ENCODE measurements at regions of chr22 and their contacts with region 1.

Region 1: DNA sequence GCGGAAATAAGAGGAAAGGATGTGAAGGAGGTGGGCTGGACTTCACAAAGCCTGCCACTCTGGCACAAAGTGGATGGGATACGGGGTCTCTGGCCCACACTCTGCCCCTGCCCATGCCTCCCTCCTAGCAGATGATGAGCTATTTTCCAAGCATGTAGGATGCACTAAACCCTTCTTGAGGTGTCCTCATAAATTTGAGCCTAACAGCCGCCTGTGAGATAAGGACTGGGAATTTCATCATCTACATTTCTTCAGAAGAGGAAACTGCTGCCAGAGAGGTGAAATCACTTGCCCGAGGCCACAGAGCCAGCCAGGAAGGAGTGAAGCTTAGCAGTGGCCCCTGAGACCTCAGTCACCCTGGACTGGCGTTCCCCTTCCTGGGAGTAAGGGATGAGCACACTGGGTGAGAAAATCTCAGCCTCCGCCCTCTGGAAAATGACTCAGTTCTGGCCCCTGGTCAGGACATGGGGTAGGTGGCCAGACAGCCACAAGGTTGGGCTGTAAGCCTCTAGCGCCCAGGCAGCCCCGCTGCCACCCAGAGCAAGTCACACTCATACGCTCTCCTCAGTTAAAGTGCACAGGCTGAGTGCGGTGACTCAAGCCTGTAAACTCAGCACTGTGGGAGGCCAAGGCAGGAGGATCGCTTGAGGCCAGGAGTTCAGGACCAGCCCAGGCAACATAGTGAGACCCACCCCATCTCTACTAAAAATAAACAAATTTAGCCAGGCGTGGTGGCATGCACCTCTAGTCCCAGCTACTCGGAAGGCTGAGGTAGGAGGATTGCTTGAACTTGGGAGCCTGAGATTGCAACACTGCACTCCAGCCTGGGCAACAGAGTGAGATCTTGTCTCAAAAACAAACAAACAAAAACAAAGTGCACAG is 27.8 kb downstream of the MB start:
- DNase-seq: peak; percentile 86 to 97
- ATAC-seq: peak; percentile 57 to 72
- H3K4me3 ChIP-seq: peak overlapping the region in 1 of 4 donors; percentile 26
- H3K27ac ChIP-seq: peak overlapping the region; percentile 90 to 99 (median 96)
- H3K4me1 ChIP-seq: peaks cover 61% of the 10 kb centered on the region in 2 donors
- H3K27me3 ChIP-seq: no peaks in the 10 kb centered on the region
- CTCF ChIP-seq: peak in 1 of 5 experiments; percentile 17
- POLR2A ChIP-seq: peak; percentile 69 to 74

Region 2: GRCh38 chr22:35617137-35617755 is 27.9 kb after region 1 on chr22 and contains the start of gene MB:
- in situ Hi-C with region 1: loop called in 1 of 4 experiments (anchors 5 kb)
- intact Hi-C with region 1: loop called (anchors 1 kb)
- DNase-seq: peak; percentile 93 to 98
- ATAC-seq: peak; percentile 41 to 50
- H3K4me3 ChIP-seq: peak within 1 kb of the TSS; percentile 40 to 56 (median 50)
- H3K27ac ChIP-seq: peak within 1 kb of the TSS; percentile 92 to 97 (median 97)
- H3K4me1 ChIP-seq: peaks cover 73 to 76% of the 10 kb centered on the region in 2 donors
- H3K27me3 ChIP-seq: no peaks in the 10 kb centered on the region
- CTCF ChIP-seq: peak in 2 of 5 experiments; percentile 16 to 25
- POLR2A ChIP-seq: peak; percentile 48 to 77
- total RNA-seq, gene MB: 7,153 to 19,373 (median 11,028) TPM

Region 3: GRCh38 chr22:35622191-35622913 is 33.0 kb after region 1 on chr22:
- in situ Hi-C with region 1: loop called in 1 of 4 experiments (anchors 5 kb)
- intact Hi-C with region 1: loop called (anchors 1 kb)
- DNase-seq: peak; percentile 96 to 100
- ATAC-seq: peak; percentile 55 to 61
- H3K4me3 ChIP-seq: peak overlapping the region in 3 of 4 donors; percentile 1 to 51 (median 8)
- H3K27ac ChIP-seq: peak overlapping the region; percentile 92 to 97 (median 97)
- H3K4me1 ChIP-seq: peaks cover 62 to 66% of the 10 kb centered on the region in 2 donors
- H3K27me3 ChIP-seq: no peaks in the 10 kb centered on the region
- CTCF ChIP-seq: no peak
- POLR2A ChIP-seq: peak; percentile 64 to 69

Region 4: DNA sequence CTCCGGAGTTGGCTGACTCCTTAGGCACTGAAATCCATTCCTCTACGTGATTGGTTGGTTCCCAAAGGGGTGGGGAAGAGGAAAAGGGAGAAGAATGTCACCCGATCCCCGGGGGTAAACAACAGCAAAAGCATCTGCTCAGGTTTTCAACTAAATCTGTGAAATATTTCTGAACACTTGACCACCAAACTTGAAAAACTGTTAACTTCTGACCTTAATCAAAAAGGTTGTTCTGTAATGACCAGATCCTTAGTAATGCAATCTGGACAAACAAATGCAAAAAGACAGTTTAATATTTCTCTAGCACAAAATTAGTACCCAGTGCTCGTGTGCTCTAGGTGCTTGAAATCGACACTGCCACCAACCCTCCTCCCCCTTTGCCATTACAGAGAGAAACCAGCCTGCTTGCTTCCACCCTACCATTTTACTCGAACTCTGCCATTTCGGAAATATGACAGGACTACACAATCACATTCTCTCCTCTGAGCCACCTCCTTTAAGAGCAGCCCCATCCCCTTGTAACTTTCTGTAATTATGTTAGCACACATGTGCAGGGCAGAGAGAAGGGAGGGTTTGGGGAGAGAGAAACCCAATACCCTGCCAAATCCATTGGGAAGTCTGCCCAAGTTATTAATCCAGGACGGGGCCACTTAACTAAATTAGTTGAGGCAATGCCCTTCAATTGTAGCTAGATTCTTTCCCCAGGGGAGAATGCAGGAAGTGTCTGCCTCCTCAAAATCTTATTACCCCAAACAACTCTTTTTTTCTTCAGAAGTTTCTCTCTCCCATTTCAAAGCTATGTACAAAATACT is 325.6 kb after region 1 on chr22:
- in situ Hi-C with region 1: no loop called
- intact Hi-C with region 1: loop called (anchors 5 kb)
- DNase-seq: peak; percentile 82 to 83
- ATAC-seq: peak; percentile 94 to 97
- H3K4me3 ChIP-seq: peak overlapping the region; percentile 49 to 57 (median 54)
- H3K27ac ChIP-seq: peak overlapping the region; percentile 84 to 91 (median 88)
- H3K4me1 ChIP-seq: peaks cover 79 to 83% of the 10 kb centered on the region in 2 donors
- H3K27me3 ChIP-seq: no peaks in the 10 kb centered on the region
- CTCF ChIP-seq: no peak
- POLR2A ChIP-seq: peak in 1 of 2 donors; percentile 31

Measured in gastrocnemius medialis (tissue), 4 donors.